ENCODE measurements at regions of chr10 and their contacts with region 1.

Region 1: DNA sequence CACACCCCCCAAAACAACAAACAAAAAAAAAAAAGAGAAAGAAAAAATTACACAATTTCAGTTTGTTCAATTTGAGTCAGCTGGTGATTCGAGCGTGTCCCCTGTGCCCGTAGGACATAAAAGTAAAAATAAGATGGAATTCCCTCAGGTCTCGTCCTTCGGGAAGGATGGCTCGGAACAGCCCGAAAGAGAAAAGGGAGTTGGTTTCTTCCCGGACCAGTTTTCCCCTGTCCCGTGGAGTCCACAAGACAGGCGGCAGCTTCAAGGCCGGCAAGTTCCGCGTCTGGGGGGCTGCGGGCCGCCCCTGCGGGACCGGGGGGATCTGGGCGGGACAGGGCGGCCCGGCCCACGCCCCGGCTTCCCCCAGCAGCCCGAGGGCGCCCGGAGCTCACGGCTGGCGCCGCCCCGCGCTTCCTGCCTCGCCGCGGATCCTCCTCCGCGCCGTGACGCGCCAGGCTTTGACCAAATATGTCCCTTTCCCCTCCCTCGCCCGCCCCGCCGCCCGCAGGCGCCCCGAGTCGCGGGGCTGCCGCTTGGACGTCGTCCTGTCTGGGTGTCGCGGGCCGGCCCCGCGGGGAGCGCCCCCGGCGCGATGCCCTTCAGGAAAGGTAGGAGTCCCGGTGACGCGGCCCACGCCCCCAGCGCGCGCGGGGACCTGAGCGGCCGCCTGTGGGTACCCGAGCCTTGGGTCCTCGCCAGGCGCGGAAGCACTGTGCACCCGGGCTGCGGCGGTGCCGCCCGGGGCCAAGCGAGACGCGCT is 55.8 kb downstream of the RBM17 start:
- DNase-seq: peak; percentile 86
- H3K4me3 Mint-ChIP-seq: peak overlapping the region; percentile 84
- H3K27ac Mint-ChIP-seq: peak overlapping the region; percentile 80
- H3K4me1 Mint-ChIP-seq: peaks cover 72% of the 10 kb centered on the region
- H3K27me3 Mint-ChIP-seq: no peaks in the 10 kb centered on the region

Region 2: GRCh38 chr10:6050801-6051445 is 93.7 kb before region 1 on chr10:
- intact Hi-C with region 1: loop called (anchors 2 kb)
- DNase-seq: peak; percentile 90
- H3K4me3 Mint-ChIP-seq: peak overlapping the region; percentile 85
- H3K27ac Mint-ChIP-seq: peak overlapping the region; percentile 91
- H3K4me1 Mint-ChIP-seq: peaks cover 83% of the 10 kb centered on the region
- H3K27me3 Mint-ChIP-seq: no peaks in the 10 kb centered on the region

Region 3: DNA sequence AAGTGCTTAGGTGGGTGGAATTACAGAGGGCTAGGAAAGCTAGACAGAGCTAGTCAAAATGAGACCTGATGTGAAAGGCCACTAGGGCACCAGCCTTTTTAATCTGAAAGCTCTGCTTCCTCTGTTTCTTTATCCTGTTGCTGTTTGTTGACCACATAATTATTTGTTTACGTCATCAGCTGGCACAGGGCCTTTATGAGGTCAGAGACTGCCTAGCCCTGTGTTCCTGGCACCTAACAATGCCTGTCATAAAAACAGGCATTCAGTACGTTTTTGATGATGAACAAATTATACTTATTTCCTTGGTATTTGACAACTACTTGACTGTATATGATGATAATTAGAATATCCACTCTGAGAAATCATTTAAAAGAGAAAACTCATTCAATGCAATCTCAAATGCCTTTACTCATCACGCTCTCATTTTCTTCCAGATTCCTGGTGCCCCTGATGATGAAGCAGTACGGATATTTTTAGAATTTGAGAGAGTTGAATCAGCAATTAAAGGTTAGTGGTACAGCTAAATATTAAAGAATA is 29.7 kb before region 1 on chr10:
- intact Hi-C with region 1: no loop called
- DNase-seq: no peak
- H3K4me3 Mint-ChIP-seq: no peak overlapping the region
- H3K27ac Mint-ChIP-seq: peak overlapping the region; percentile 48
- H3K4me1 Mint-ChIP-seq: peaks cover 23% of the 10 kb centered on the region
- H3K27me3 Mint-ChIP-seq: no peaks in the 10 kb centered on the region

Region 4: GRCh38 chr10:6130848-6131470 is 13.6 kb before region 1 on chr10:
- intact Hi-C with region 1: loop called (anchors 1 kb)
- DNase-seq: no peak
- H3K4me3 Mint-ChIP-seq: no peak overlapping the region
- H3K27ac Mint-ChIP-seq: peak overlapping the region; percentile 49
- H3K4me1 Mint-ChIP-seq: peaks cover 44% of the 10 kb centered on the region
- H3K27me3 Mint-ChIP-seq: peaks cover 5% of the 10 kb centered on the region

Region 5: DNA sequence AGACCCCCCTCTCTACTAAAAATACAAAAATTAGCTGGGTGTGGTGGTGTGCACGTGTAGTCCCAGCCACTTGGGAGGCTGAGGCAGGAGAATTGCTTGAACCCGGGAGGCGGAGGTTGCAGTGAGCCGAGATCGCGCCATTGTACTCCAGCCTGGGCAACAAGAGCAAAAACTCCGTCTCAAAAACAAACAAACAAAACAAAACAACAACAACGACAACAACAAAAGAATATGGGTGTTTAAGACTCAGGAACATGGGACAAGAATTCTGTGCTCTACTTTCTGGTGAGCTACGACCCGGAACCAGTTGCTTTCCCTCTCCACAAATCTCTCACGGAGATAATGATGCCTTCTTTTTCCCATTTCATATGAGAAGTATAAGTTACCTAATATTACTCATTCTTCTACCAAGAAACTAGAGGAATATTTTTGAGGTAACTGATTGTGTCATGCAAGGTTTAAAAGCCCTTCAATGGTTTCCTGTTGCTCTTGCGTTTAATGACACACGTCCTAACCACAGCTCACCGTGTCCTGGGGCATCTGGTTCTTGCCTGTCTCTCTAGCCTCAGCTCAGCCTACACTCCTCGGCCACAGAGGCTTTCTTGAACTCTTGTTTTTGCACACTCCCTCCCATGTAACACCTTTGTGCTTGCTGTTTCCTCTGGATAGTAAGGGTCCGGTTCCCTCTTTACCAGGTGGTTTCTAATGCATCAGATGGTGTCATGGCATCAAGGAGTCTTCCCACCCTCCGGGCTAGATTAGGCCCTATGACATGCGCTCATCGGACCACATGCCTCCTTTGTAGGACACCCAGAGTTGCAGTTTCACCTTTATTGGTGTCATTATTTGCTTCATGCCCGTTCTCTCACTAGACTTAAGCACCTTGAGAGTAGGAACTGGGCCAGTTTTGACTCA is 125.6 kb after region 1 on chr10:
- intact Hi-C with region 1: loop called (anchors 5 kb)
- DNase-seq: peak; percentile 73
- H3K4me3 Mint-ChIP-seq: peak overlapping the region; percentile 22
- H3K27ac Mint-ChIP-seq: peak overlapping the region; percentile 89
- H3K4me1 Mint-ChIP-seq: peaks cover 58% of the 10 kb centered on the region
- H3K27me3 Mint-ChIP-seq: no peaks in the 10 kb centered on the region

Region 6: DNA sequence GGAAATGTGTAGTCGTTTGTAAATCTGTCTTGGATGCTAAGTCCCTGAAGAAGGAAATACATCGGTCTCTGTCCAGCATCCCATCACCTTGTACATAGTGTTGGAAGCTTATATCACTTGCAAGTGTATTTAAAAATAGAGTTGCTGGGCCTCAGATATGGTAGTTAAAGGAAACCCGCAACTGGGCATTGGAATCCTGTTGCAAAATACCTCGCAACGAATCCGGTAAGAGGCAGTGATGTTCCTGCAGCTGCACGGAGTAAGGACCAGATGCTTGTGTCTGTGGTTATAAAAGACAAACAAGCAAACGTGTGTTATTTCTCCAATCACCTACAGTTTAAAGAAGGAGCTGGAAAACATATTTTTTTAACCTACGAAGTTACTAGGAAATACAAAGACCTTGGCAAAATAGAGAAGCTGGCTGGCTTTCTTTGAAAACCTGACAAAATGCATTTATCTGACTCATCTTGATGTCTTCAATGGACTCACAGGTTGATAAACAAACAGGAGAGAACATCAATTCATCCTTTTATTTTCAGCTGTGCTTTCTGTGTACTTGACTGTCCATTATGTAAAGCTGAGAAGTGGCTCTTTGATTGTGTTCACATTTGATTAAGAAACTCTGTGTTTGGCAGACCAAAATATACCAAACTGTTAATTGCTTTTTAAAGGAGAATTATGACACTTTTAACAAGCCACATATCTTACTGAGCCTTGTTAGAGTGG is 939.9 kb after region 1 on chr10:
- intact Hi-C with region 1: no loop called
- DNase-seq: no peak
- H3K4me3 Mint-ChIP-seq: no peak overlapping the region
- H3K27ac Mint-ChIP-seq: no peak overlapping the region
- H3K4me1 Mint-ChIP-seq: no peaks in the 10 kb centered on the region
- H3K27me3 Mint-ChIP-seq: peaks cover 54% of the 10 kb centered on the region

Measured in activated T-helper 2 cell treated with anti-CD3 and anti-CD28 coated beads, Interferon-gamma antibody, Interleukin-2, Interleukin-4, amounts not matched to agents 10 μg/mL and 5 μg/mL and 100 μg/mL, durations not matched to agents 14 hours and 24 hours and 36 hours (primary cell).